Mammary epithelial cell (primary cell): ENCODE measurements at regions of chr9 and their contacts with region 1.

Region 1: GRCh38 chr9:86181379-86182315 is 77.8 kb downstream of the C9orf153 start:
- DNase-seq: peak; percentile 43
- H3K4me3 ChIP-seq: no peak overlapping the region
- H3K27ac ChIP-seq: no peak overlapping the region
- H3K4me1 ChIP-seq: no peaks in the 10 kb centered on the region
- H3K27me3 ChIP-seq: no peaks in the 10 kb centered on the region
- CTCF ChIP-seq: no peak

Region 2: GRCh38 chr9:86135371-86135770 is 46.3 kb before region 1 on chr9:
- CTCF ChIA-PET with region 1: no interaction called
- dilution Hi-C with region 1: no loop called
- in situ Hi-C with region 1: no loop called
- intact Hi-C with region 1: loop called (anchors 1 kb)
- DNase-seq: no peak
- H3K4me3 ChIP-seq: no peak overlapping the region
- H3K27ac ChIP-seq: no peak overlapping the region
- H3K4me1 ChIP-seq: no peaks in the 10 kb centered on the region
- H3K27me3 ChIP-seq: no peaks in the 10 kb centered on the region
- CTCF ChIP-seq: no peak

Region 3: DNA sequence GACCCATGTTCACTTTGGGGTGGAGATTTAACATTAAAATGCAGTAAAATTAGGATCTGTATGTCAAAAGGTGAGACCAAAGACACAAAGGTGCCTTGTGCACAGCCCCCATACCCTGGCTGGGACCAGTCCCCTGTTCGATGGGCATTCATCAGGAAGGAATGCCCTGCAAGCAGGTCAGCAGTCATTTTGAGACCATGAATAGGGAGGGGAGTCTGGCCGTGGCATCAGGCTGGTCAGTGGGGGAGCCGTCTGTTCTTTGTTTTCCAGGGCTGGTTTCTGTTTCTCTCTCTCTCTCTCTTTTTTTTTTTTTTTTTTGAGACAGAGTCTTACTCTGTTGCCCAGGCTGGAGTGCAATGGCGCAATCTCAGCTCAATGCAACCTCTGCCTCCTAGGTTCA is 13.4 kb before region 1 on chr9:
- CTCF ChIA-PET with region 1: interaction called, 10 read pairs
- dilution Hi-C with region 1: no loop called
- in situ Hi-C with region 1: no loop called
- intact Hi-C with region 1: no loop called
- DNase-seq: no peak
- H3K4me3 ChIP-seq: no peak overlapping the region
- H3K27ac ChIP-seq: no peak overlapping the region
- H3K4me1 ChIP-seq: no peaks in the 10 kb centered on the region
- H3K27me3 ChIP-seq: no peaks in the 10 kb centered on the region
- CTCF ChIP-seq: no peak

Region 4: GRCh38 chr9:86257391-86257790 is 75.7 kb after region 1 on chr9:
- CTCF ChIA-PET with region 1: no interaction called
- dilution Hi-C with region 1: no loop called
- in situ Hi-C with region 1: no loop called
- intact Hi-C with region 1: no loop called
- DNase-seq: no peak
- H3K4me3 ChIP-seq: no peak overlapping the region
- H3K27ac ChIP-seq: no peak overlapping the region
- H3K4me1 ChIP-seq: no peaks in the 10 kb centered on the region
- H3K27me3 ChIP-seq: no peaks in the 10 kb centered on the region
- CTCF ChIP-seq: no peak